ENCODE measurements at regions of chr16 and their contacts with region 1.

Region 1: GRCh38 chr16:83356266-83356665 is 451.5 kb upstream of the HSBP1 start:
- DNase-seq: peak in 1 of 5 donors; percentile 12
- ATAC-seq: peak in 3 of 4 donors; percentile 59 to 75 (median 61)
- H3K4me3 ChIP-seq: no peak overlapping the region
- H3K27ac ChIP-seq: no peak overlapping the region
- H3K4me1 ChIP-seq: peaks cover 0 to 8% (median 0%) of the 10 kb centered on the region in 12 donors
- H3K27me3 ChIP-seq: no peaks in the 10 kb centered on the region
- CTCF ChIP-seq: peak; percentile 40 to 67 (median 51)
- POLR2A ChIP-seq: no peak

Region 2: DNA sequence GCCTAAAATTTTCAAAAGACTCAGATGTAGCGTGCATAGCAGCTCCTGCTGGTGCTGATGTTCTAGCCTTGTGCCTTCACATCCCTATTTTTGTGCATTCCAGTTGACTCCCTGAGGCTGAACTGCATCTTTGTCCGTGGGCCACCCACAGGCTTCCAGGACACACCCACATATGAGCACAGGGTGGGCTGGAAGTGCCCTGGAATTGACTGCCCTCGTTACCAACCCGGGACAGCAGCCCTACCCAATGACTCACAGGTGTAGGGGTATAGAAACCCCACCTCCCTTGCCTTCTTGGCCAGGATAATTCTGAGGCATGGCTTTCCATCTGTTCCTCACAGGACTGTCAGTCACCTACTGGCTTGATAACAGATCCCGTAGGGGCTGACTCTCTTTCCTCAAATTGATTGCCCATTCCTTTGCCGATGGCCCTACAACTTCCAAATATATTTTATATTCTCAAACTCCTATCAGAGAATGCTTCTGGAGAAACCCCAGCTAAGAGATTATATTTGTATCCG is 795.4 kb before region 1 on chr16:
- intact Hi-C with region 1: no loop called
- DNase-seq: no peak
- ATAC-seq: no peak
- H3K4me3 ChIP-seq: no peak overlapping the region
- H3K27ac ChIP-seq: no peak overlapping the region
- H3K4me1 ChIP-seq: no peaks in the 10 kb centered on the region
- H3K27me3 ChIP-seq: no peaks in the 10 kb centered on the region
- CTCF ChIP-seq: no peak
- POLR2A ChIP-seq: no peak

Region 3: GRCh38 chr16:82603784-82604411 is 752.4 kb before region 1 on chr16:
- intact Hi-C with region 1: loop called in 2 of 10 experiments (anchors 10 kb)
- DNase-seq: peak; percentile 45 to 67 (median 52)
- ATAC-seq: peak; percentile 56 to 93 (median 84)
- H3K4me3 ChIP-seq: no peak overlapping the region
- H3K27ac ChIP-seq: no peak overlapping the region
- H3K4me1 ChIP-seq: peaks cover 0 to 6% (median 0%) of the 10 kb centered on the region in 12 donors
- H3K27me3 ChIP-seq: no peaks in the 10 kb centered on the region
- CTCF ChIP-seq: peak; percentile 45 to 83 (median 74)
- POLR2A ChIP-seq: no peak

Region 4: GRCh38 chr16:82761236-82761635 is 595.0 kb before region 1 on chr16:
- intact Hi-C with region 1: loop called in 2 of 10 experiments (anchors 10 kb)
- DNase-seq: peak; percentile 78 to 93 (median 86)
- ATAC-seq: peak; percentile 91 to 94 (median 92)
- H3K4me3 ChIP-seq: peak overlapping the region in 5 of 12 donors; percentile 12 to 40 (median 28)
- H3K27ac ChIP-seq: peak overlapping the region; percentile 32 to 80 (median 63)
- H3K4me1 ChIP-seq: peaks cover 0 to 40% (median 20%) of the 10 kb centered on the region in 12 donors
- H3K27me3 ChIP-seq: no peaks in the 10 kb centered on the region
- CTCF ChIP-seq: no peak
- POLR2A ChIP-seq: no peak

Region 5: DNA sequence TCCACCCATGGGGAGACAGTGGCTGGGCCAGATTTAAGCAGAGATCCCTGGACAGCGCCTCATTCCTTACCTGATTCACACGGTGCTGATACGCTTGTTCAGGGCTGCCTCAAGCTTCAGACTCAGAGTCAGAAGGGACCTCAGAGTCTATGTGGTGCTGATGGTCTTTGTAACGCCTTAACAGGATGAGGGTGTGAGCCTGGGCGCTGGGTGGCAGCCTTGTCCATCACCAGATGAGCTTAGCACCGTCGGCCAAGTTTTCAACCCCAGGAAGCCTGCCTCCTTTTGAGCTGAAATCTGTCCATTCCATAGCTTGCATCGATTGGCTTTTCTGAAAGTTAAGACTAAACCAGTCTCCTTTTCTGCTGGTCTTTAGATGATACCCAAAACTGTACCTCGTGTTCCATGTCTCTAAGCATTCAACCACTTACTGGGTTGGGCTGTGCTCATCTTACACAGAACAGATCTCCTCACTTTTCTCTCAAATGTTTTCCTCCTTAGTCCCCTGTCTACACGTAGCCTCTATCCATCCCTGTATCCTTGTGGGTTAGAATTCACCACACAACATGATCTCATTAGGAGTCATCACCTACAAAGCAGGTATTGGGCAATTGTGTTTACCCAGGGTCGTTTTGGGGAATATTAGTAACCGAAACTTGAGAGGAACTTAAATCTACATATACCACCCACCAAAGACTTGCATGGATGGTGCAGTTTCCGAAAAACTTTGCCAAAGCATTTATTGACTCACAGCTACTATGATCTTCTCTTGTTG is 156.1 kb before region 1 on chr16:
- intact Hi-C with region 1: loop called in 1 of 10 experiments (anchors 10 kb)
- DNase-seq: peak in 1 of 5 donors; percentile 29
- ATAC-seq: peak in 3 of 4 donors; percentile 76 to 80 (median 79)
- H3K4me3 ChIP-seq: no peak overlapping the region
- H3K27ac ChIP-seq: no peak overlapping the region
- H3K4me1 ChIP-seq: no peaks in the 10 kb centered on the region
- H3K27me3 ChIP-seq: no peaks in the 10 kb centered on the region
- CTCF ChIP-seq: peak in 7 of 12 donors; percentile 8 to 41 (median 27)
- POLR2A ChIP-seq: no peak

Region 6: DNA sequence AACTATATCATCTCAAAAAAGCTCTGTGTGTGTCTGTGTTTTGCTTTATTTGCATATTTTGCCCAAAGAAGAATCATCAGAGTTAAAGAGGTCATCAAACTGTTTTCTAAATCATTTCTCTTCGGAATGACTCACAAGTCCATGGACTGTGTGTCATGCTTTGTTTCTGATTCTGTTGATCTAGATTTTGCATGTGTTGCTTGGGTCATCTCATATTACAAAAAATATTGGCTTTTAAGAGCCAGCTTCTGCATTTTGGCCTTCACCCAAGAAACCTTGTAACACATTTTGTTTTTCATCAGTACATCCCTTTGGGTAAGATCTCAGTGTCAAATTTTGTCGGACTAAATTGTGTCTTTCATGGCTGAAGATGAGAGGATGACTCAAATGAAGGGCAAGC is 19.6 kb before region 1 on chr16:
- intact Hi-C with region 1: no loop called
- DNase-seq: no peak
- ATAC-seq: no peak
- H3K4me3 ChIP-seq: no peak overlapping the region
- H3K27ac ChIP-seq: no peak overlapping the region
- H3K4me1 ChIP-seq: peaks cover 0 to 4% (median 0%) of the 10 kb centered on the region in 12 donors
- H3K27me3 ChIP-seq: no peaks in the 10 kb centered on the region
- CTCF ChIP-seq: no peak
- POLR2A ChIP-seq: no peak

Region 7: DNA sequence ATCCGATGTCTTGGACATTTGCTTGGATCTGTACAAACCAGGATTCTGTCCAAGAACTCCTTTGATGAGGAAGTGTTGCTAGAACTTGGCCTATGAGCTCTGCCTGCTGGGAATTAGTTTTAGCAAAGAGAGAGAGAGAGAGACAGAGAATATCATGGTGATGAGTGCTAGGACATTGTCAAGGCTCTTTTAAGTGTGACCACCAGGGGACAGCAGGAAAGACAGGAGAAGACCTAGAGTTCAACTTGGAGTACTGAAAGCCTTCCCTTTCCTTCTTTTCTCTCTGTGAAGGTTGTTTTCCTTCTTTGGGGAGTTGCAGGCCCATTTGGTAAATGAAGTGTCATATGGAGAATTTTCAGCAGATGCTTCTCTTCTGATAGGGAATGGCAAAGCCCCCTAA is 62.3 kb after region 1 on chr16:
- intact Hi-C with region 1: loop called in 1 of 10 experiments (anchors 10 kb)
- DNase-seq: no peak
- ATAC-seq: no peak
- H3K4me3 ChIP-seq: no peak overlapping the region
- H3K27ac ChIP-seq: no peak overlapping the region
- H3K4me1 ChIP-seq: no peaks in the 10 kb centered on the region
- H3K27me3 ChIP-seq: no peaks in the 10 kb centered on the region
- CTCF ChIP-seq: no peak
- POLR2A ChIP-seq: no peak